H1 (cell line): ENCODE measurements at regions of chr1 and their contacts with region 1.

Region 1: DNA sequence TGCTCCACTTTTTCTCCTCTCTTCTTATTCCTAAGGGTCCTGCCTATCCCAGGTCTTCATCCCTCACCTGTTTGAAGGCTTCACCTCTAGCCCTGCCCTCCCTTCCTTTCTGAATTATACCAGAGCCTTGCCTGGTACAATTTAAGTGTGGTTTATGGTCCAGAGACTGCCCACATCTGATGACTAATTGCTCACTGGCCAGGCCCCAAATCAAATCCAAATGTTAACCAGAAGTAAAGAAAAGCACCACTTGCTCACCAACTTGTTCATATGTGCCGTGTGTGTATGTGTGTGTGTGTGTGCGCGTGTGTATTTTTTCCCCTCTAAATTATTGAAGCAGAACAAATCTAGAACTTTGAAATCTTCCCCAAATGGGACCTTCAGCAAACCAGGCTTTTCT is 26.4 kb downstream of the MYOM3 start:
- DNase-seq: no peak
- H3K4me3 ChIP-seq: no peak overlapping the region
- H3K27ac ChIP-seq: no peak overlapping the region
- H3K4me1 ChIP-seq: no peaks in the 10 kb centered on the region
- H3K27me3 ChIP-seq: no peaks in the 10 kb centered on the region
- CTCF ChIP-seq: no peak
- EP300 ChIP-seq: no peak
- POLR2A ChIP-seq: no peak
- RAD21 ChIP-seq: no peak

Region 2: DNA sequence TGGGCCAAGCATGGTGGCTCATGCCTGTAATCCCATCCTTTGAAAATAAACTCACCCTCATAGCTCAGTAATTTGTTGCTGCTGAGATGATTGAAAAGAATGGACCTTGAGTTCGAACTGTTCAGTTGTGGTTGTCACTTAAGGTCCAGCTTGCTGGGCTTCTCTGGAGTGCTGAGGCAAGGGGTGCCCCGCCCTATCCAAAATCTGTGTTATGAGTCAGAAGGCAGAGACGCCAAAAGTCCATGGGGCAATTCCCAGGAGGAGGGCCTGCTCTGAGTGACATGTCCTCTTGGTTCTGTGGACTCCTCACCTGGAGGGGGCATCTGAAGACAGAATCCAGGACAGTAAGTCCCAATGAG is 38.5 kb before region 1 on chr1:
- CTCF ChIA-PET with region 1: no interaction called
- POLR2A ChIA-PET with region 1: no interaction called
- DNase-seq: no peak
- H3K4me3 ChIP-seq: no peak overlapping the region
- H3K27ac ChIP-seq: no peak overlapping the region
- H3K4me1 ChIP-seq: no peaks in the 10 kb centered on the region; a peak in 1 of 7 replicates
- H3K27me3 ChIP-seq: no peaks in the 10 kb centered on the region
- CTCF ChIP-seq: no peak
- EP300 ChIP-seq: no peak
- POLR2A ChIP-seq: no peak
- RAD21 ChIP-seq: no peak

Region 3: DNA sequence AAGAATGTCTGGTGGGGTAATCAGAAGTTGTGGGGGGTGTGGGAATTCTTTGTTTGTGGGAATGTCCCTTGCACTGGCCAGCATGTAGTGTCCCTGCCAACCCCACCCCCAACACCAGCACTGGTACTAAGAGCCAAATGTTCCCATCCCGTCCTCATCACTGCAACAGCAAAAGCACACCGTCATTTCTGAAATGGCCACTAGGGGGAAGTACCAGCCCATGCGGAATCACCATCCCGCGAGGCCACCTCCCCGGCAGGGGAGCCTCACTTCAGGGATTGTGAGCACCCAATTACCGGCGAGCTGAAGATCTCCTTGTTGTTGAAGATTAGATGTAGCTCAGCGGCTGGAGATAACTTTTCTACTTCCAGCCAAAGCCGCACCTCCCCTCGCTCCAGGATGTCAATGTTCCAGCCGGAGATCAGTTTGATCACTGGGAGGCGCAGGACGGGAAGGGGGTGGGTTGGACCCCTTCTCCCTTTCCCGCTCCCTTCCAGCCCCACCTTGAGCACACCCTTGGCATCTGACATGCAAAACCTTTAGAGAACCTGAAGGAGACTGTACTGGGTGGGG is 14.6 kb before region 1 on chr1:
- CTCF ChIA-PET with region 1: interaction called, 32 read pairs
- POLR2A ChIA-PET with region 1: interaction called, 9 read pairs
- DNase-seq: peak; percentile 53 to 91
- H3K4me3 ChIP-seq: peak overlapping the region in 2 of 4 experiments; percentile 29 to 42; a peak in 3 of 8 replicates
- H3K27ac ChIP-seq: no peak overlapping the region
- H3K4me1 ChIP-seq: peaks cover 0 to 3% (median under 1%) of the 10 kb centered on the region in 4 experiments; a peak in 4 of 7 replicates
- H3K27me3 ChIP-seq: no peaks in the 10 kb centered on the region; a peak in 1 of 7 replicates
- CTCF ChIP-seq: peak; percentile 90 to 94 (median 94)
- EP300 ChIP-seq: 0 out of 3 replicates have a peak, but pooled peaks of 1 of the 2 experiments have one; percentile 7
- POLR2A ChIP-seq: no peak
- RAD21 ChIP-seq: peak; percentile 86 to 93

Region 4: DNA sequence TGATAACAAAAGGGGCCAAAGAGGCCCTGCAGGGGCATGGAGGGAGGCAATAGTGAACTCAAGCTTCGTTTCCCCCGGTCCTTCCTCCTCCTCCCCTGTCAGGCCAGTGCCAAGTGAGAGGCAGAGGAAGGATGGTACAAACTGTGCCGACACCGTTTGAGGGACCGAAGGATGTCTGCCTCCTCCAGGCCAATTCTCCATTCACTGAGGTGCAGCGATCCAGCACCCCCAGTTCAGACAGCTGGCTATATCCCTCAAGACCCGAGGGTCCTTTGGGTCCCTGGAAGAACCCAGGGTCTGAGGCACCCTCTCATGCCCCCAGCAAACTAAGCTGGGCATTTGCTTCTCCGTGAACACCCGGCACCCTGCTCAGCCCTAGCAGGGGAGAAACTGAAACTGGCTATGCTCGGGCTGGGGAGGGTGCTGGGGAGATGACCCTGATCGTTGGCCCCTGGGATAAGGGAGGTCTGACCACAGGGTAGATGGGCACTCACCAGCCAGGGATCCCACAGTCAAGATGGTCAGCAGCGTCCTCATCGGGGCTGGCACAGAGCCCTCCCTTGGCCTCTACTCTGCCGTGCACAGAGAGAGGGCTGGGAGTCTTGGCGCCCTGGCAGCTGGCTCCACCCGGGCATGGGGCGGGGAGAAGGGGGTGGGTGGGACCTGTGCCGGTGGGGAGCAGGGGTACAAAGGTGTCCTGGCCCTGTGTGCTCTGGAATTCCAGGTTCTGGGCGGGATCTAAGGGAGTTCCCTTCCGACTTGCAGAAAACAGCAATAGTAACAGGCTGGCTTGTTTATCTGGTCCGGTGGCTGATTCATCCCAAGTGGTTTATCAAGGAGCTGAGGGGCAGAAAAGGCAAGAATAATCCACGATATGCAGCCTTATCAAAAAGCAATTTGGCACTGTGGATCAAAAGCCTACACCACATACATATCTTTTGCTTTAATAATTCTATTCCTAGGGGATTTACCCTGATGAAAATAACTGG is 57.3 kb after region 1 on chr1 and contains the start of gene IL22RA1:
- CTCF ChIA-PET with region 1: no interaction called
- POLR2A ChIA-PET with region 1: no interaction called
- DNase-seq: no peak
- H3K4me3 ChIP-seq: no peak within 1 kb of the TSS
- H3K27ac ChIP-seq: no peak within 1 kb of the TSS
- H3K4me1 ChIP-seq: peaks cover 0 to 2% (median 0%) of the 10 kb centered on the region in 4 experiments; a peak in 1 of 7 replicates
- H3K27me3 ChIP-seq: no peaks in the 10 kb centered on the region
- CTCF ChIP-seq: no peak
- EP300 ChIP-seq: no peak
- POLR2A ChIP-seq: no peak
- RAD21 ChIP-seq: no peak
- total RNA-seq, gene IL22RA1: 0.17 and 0.21 TPM in 2 replicates